OCI-LY7 (cell line): ENCODE measurements at regions of chr3 and their contacts with region 1.

Region 1: GRCh38 chr3:67704322-67704721 is 49.9 kb upstream of the SUCLG2 start:
- DNase-seq: peak; percentile 66
- H3K4me3 ChIP-seq: no peak overlapping the region
- H3K27ac ChIP-seq: no peak overlapping the region
- H3K4me1 ChIP-seq: peaks cover 19% of the 10 kb centered on the region
- CTCF ChIP-seq: peak; percentile 70

Region 2: DNA sequence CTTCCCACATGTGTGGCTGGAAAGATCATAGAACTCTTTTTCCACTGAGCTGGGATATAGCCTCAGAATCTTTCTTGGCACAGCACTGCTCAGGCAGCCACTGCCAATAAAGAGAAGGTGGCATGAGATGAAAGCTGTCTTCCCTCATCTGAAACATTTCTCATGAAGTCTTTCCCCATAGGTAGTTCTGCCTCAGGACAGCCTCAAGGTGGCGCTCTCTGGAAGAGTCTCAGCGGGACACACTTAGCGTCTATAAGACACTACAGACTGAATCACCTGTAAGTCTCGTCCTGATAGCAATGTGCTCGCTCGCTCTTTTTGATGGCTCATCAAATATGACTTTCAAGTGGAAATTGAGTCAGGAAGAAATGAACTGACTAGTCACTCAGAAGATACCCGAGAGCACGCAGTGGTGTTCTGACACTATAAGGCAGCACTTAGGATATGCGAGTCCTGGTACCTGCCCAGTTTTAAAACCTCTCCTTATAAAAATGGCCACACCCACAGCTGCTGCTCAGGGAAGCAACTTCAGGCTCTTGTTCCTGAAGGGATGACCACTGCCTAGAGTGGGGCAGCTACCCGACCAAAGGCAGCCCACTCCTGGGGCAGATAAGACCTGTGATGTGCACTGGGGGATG is 319.4 kb before region 1 on chr3:
- CTCF ChIA-PET with region 1: no interaction called
- POLR2A ChIA-PET with region 1: interaction called, 3 read pairs
- intact Hi-C with region 1: loop called (anchors 1 kb)
- DNase-seq: peak; percentile 63
- H3K4me3 ChIP-seq: no peak overlapping the region
- H3K27ac ChIP-seq: no peak overlapping the region
- H3K4me1 ChIP-seq: peaks cover 8% of the 10 kb centered on the region
- CTCF ChIP-seq: peak; percentile 85

Region 3: DNA sequence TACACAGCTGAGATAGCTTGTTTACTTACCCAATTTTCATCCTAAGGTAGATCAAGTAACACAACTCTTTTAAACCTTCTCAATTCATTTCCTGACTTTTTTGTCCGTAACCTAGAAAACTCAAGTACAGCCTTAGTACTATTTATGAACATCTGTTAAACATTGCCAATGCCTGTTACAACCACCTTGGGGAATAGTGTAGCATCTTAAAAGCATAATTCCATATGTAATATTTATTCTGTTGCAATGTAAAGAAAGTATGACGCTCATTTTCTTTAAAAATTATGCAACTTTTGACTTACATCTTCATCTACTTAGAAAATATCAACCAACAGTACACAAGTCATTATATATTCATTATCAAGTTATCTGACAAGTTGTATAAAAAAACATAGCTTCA is 104.5 kb before region 1 on chr3:
- CTCF ChIA-PET with region 1: no interaction called
- POLR2A ChIA-PET with region 1: no interaction called
- intact Hi-C with region 1: loop called (anchors 2 kb)
- DNase-seq: no peak
- H3K4me3 ChIP-seq: no peak overlapping the region
- H3K27ac ChIP-seq: no peak overlapping the region
- H3K4me1 ChIP-seq: peaks cover 7% of the 10 kb centered on the region
- CTCF ChIP-seq: no peak